ENCODE measurements at regions of chr22 and their contacts with region 1.

Region 1: GRCh38 chr22:41746567-41747400 is 47.5 kb downstream of the MEI1 start:
- DNase-seq: peak; percentile 63
- ATAC-seq: peak; percentile 89
- H3K4me3 Mint-ChIP-seq: no peak overlapping the region
- H3K27ac Mint-ChIP-seq: no peak overlapping the region
- H3K4me1 Mint-ChIP-seq: peaks cover 6% of the 10 kb centered on the region
- H3K27me3 Mint-ChIP-seq: peaks cover 4% of the 10 kb centered on the region
- CTCF ChIP-seq: peak; percentile 54

Region 2: DNA sequence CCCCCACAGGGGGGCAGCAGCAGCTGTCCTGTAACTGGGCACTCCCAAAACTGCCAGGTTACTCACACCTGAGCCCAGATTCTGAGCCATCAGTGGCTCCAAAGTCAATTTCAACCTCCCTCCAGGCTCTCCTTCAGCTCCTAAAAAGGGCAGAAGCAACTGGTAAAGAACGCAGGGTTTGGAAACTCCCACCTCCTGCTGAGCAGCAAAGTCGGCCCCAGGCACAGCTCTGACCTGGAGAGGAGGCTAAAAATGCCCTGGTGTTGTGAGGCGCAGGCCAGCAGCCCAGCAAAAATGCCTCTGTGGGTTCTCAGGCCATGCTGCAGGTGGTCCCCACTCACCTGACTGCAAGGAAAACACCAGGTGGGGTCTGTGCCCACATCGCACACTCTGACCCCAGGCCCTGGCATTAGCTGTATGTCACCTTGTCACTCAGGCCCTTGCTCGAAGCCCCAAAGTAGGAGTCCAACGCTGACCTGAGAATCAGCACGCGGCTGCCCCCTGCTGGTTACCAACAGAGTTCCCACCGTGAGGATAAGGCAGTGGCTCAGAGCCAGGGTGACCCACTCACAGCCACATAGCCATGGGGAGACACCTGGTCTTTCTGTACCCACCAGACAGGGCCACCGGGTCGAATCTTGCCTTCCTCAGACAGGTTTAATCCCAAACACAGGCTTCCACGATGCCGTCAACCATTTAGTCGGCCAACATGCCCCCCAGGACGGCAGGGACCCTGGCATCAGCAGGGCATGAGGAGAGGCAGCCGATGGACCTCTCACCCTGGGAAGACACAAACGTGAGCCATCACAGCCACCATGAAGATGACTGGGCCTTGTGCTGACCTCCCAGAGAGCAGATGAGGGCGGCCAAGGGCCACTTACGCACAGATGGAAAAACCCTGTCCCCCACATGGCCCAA is 213.6 kb before region 1 on chr22:
- CTCF ChIA-PET with region 1: no interaction called
- POLR2A ChIA-PET with region 1: no interaction called
- intact Hi-C with region 1: no loop called
- DNase-seq: peak; percentile 84
- ATAC-seq: peak; percentile 92
- H3K4me3 Mint-ChIP-seq: no peak overlapping the region
- H3K27ac Mint-ChIP-seq: peak overlapping the region; percentile 25
- H3K4me1 Mint-ChIP-seq: peaks cover 3% of the 10 kb centered on the region
- H3K27me3 Mint-ChIP-seq: no peaks in the 10 kb centered on the region
- CTCF ChIP-seq: peak; percentile 80

Region 3: DNA sequence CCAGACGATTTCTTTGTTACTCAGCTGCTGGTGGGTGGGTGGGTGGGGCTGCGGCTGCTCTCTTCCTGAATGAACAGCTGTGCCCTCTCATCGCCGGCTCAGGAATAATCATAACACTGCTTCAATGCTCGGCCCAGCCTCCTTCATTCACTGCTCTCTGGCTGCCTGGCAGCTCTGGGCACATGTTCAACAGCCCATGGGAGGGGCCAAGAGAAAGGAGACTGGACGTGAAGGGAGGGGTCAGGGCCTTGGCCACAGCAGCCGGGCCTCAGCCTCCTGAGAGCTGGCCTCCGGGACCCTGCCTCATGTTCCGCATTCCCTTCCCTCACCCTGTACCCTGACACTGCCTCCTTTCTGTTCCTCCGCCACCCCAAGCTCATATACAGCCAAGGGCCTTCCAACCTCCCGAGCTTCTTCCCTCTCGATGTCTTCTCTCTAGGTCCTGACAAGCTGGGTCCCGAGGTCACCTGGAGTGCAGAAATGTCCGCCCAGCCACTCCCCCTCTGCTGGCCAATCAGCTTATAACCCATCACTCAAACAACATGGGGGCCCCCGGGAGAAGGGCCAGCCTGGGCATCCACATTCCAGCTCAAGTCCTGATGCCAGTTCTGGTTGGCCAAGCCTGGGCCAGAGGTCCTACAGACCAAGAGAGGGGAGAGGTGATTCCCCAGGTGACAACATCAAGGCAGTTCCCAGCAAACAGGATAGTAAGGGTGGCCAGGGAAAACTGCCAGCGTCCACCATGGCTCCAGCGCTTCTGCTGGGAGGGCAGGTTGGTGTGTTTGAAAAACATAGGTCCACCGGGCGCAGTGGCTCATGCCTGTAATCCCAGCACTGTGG is 189.2 kb before region 1 on chr22:
- CTCF ChIA-PET with region 1: no interaction called
- POLR2A ChIA-PET with region 1: no interaction called
- intact Hi-C with region 1: no loop called
- DNase-seq: peak; percentile 41
- ATAC-seq: peak; percentile 75
- H3K4me3 Mint-ChIP-seq: no peak overlapping the region
- H3K27ac Mint-ChIP-seq: no peak overlapping the region
- H3K4me1 Mint-ChIP-seq: peaks cover 7% of the 10 kb centered on the region
- H3K27me3 Mint-ChIP-seq: peaks cover 20% of the 10 kb centered on the region
- CTCF ChIP-seq: no peak

Region 4: DNA sequence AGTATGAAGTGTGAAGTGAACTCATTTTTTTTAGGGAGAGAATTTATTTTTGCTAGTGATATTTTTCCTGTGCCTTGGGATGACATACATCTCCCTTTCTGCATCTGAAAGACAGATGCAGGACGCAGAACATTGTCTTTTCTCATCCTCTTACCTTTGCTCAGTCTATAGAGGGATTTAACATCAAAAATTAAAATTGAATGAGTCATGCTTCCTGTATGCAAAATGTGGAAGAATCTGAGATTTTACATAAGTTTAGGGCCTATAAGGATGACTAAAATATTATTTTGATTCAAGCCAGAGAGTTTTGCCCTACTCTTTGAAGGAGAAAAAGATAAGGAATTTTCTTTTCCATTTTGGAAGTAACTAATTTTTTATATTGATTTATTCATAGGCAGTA is 98.4 kb before region 1 on chr22:
- CTCF ChIA-PET with region 1: no interaction called
- POLR2A ChIA-PET with region 1: no interaction called
- intact Hi-C with region 1: no loop called
- DNase-seq: no peak
- ATAC-seq: no peak
- H3K4me3 Mint-ChIP-seq: no peak overlapping the region
- H3K27ac Mint-ChIP-seq: peak overlapping the region; percentile 72
- H3K4me1 Mint-ChIP-seq: peaks cover 13% of the 10 kb centered on the region
- H3K27me3 Mint-ChIP-seq: no peaks in the 10 kb centered on the region
- CTCF ChIP-seq: no peak

Region 5: DNA sequence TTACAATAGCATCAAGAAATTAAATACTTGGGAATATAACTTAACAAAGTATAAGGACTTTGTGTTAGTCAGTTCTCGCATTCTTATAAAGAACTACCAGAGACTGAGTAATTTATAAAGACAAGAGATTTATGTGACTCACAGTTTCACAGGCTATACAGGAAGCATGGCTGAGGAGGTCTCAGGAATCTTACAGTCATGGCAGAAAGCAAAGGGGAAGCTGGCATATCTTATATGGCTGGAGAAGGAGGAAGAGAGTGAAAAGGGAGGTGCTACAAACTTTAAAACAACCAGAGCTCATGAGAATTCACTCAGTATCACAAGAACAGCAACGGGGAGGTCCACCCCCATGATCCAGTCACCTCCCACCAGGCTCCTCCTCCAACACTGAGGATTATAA is 21.6 kb after region 1 on chr22:
- CTCF ChIA-PET with region 1: interaction called, 12 read pairs
- POLR2A ChIA-PET with region 1: no interaction called
- intact Hi-C with region 1: no loop called
- DNase-seq: no peak
- ATAC-seq: peak; percentile 76
- H3K4me3 Mint-ChIP-seq: no peak overlapping the region
- H3K27ac Mint-ChIP-seq: peak overlapping the region; percentile 43
- H3K4me1 Mint-ChIP-seq: peaks cover 5% of the 10 kb centered on the region
- H3K27me3 Mint-ChIP-seq: no peaks in the 10 kb centered on the region
- CTCF ChIP-seq: no peak

Region 6: GRCh38 chr22:41780746-41781505 is 34.1 kb after region 1 on chr22:
- CTCF ChIA-PET with region 1: interaction called, 15 read pairs
- POLR2A ChIA-PET with region 1: interaction called, 3 read pairs
- intact Hi-C with region 1: no loop called
- DNase-seq: peak; percentile 98
- ATAC-seq: peak; percentile 94
- H3K4me3 Mint-ChIP-seq: peak overlapping the region; percentile 81
- H3K27ac Mint-ChIP-seq: peak overlapping the region; percentile 99
- H3K4me1 Mint-ChIP-seq: peaks cover 39% of the 10 kb centered on the region
- H3K27me3 Mint-ChIP-seq: no peaks in the 10 kb centered on the region
- CTCF ChIP-seq: no peak

Region 7: GRCh38 chr22:41786418-41786817 is 39.6 kb after region 1 on chr22:
- CTCF ChIA-PET with region 1: interaction called, 15 read pairs
- POLR2A ChIA-PET with region 1: no interaction called
- intact Hi-C with region 1: no loop called
- DNase-seq: no peak
- ATAC-seq: no peak
- H3K4me3 Mint-ChIP-seq: no peak overlapping the region
- H3K27ac Mint-ChIP-seq: no peak overlapping the region
- H3K4me1 Mint-ChIP-seq: peaks cover 25% of the 10 kb centered on the region
- H3K27me3 Mint-ChIP-seq: no peaks in the 10 kb centered on the region
- CTCF ChIP-seq: no peak